ENCODE measurements at regions of chr16 and their contacts with region 1.

Region 1: GRCh38 chr16:15777533-15778203 is 79.2 kb downstream of the MYH11 start:
- DNase-seq: no peak
- ATAC-seq: peak in 1 of 2 donors; percentile 20
- H3K4me3 ChIP-seq: no peak overlapping the region
- H3K27ac ChIP-seq: no peak overlapping the region
- H3K4me1 ChIP-seq: no peaks in the 10 kb centered on the region
- H3K27me3 ChIP-seq: no peaks in the 10 kb centered on the region

Region 2: DNA sequence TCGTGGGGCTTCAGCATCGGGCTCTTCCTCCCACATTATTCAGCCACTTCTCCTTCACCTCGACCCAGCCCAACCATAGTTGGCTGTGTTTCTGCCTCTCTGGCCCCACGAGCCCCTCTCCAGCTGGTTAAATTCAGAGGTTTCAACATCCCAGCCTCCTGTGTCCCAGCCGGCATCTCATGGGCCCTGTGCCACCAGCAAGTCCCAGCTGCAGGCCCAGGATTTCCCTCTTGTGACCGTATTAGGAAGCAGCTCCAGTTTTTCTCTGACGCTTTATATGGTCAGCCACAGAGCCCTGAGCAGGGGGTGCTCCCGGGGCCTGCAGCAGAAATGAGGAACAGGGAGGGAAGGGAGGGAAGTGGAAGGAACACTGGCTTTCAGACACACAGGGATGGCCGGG is 51.8 kb after region 1 on chr16:
- intact Hi-C with region 1: loop called in 2 of 4 experiments (anchors 10 kb)
- DNase-seq: peak; percentile 71 to 86 (median 78)
- ATAC-seq: peak; percentile 73 to 77
- H3K4me3 ChIP-seq: no peak overlapping the region
- H3K27ac ChIP-seq: no peak overlapping the region
- H3K4me1 ChIP-seq: peaks cover 4% of the 10 kb centered on the region
- H3K27me3 ChIP-seq: no peaks in the 10 kb centered on the region

Region 3: DNA sequence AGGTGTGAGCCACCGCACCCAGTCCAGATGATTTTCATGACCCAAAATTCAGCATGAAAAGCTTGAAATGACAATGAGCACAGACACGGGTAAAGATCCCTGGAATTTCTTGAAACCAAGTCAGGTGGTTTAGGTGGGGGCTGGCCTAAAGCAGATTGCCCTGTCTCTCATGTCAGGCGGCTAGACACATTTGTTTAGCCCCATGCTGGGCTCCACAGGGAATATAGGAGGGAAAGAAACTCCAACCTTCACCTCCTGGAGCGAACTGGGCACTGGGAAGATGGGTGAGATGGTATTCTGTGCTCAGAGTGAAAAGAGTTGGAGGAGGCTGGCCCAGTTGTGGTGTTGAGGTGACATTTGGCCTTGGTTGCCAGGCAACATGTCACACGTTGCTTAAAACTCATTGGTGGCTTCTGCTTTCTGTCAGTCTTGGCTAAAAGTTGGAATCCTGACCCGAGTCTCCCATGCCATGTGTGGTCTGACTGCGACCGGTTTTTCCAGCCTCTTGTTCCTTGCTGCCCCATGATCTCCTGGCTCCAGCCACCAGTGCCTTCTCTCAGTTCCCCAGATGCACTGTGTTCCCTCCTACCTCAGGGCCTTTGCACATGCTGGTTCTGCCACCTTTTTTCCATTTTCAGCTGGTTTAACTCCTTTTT is 331.9 kb after region 1 on chr16:
- intact Hi-C with region 1: loop called in 1 of 4 experiments (anchors 10 kb)
- DNase-seq: no peak
- ATAC-seq: no peak
- H3K4me3 ChIP-seq: no peak overlapping the region
- H3K27ac ChIP-seq: no peak overlapping the region
- H3K4me1 ChIP-seq: no peaks in the 10 kb centered on the region
- H3K27me3 ChIP-seq: no peaks in the 10 kb centered on the region